Ovary (tissue), 10 donors: ENCODE measurements at regions of chr7 and their contacts with region 1.

Region 1: DNA sequence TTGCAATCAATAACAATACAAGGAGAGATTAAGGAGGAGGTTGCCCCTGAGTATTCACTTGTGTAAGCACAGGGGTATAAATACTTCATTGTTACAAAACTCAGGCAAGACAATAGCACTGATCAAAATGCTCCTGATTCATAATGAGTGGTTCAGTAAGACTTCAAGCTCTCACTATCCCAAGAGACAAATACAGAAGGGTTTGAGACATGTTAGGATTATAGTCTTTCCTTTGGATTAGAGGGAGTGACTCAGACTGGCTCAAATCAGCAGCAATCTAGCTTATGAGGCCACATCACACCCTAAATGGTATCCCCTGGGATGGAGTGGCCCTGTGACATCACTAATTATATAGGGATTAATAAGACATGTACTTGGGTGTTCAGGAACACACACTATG is 167.2 kb upstream of the HGF start:
- DNase-seq: no peak
- H3K4me3 ChIP-seq: no peak overlapping the region
- H3K27ac ChIP-seq: no peak overlapping the region
- H3K4me1 ChIP-seq: no peaks in the 10 kb centered on the region
- H3K27me3 ChIP-seq: no peaks in the 10 kb centered on the region
- CTCF ChIP-seq: no peak
- EP300 ChIP-seq: no peak
- POLR2A ChIP-seq: no peak

Region 2: DNA sequence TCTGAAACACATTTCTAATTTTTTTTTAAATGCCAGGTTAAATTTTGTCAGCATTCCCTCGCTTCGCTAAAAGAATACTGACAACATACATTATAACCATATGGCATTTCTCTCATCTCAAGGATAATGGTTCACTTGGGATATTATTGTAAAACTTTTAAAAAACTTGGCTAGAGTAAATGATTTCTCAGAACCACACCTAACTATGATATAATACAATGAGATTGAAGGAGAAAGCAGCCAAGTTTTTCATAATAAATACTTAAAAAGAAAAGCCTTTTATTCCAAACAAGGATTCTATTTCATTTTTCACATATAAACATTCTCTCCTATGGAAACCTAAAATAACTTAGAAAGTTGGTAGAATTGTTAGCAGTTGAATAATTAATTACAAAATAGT is 581.2 kb before region 1 on chr7:
- intact Hi-C with region 1: loop called in 1 of 4 experiments (anchors 10 kb)
- DNase-seq: no peak
- H3K4me3 ChIP-seq: no peak overlapping the region
- H3K27ac ChIP-seq: no peak overlapping the region
- H3K4me1 ChIP-seq: no peaks in the 10 kb centered on the region
- H3K27me3 ChIP-seq: no peaks in the 10 kb centered on the region
- CTCF ChIP-seq: no peak
- EP300 ChIP-seq: no peak
- POLR2A ChIP-seq: no peak